Activated CD4-positive, alpha-beta memory T cell treated with anti-CD3 and anti-CD28 coated beads, Interleukin-2, amount 10 ng/mL, durations not matched to agents 7 days and 5 days (primary cell): ENCODE measurements at regions of chr1 and their contacts with region 1.

Region 1: GRCh38 chr1:66331657-66332547 is 202.1 kb upstream of the SGIP1 start:
- DNase-seq: peak; percentile 63
- H3K4me3 Mint-ChIP-seq: peak overlapping the region; percentile 98
- H3K27ac Mint-ChIP-seq: peak overlapping the region; percentile 93
- H3K4me1 Mint-ChIP-seq: peaks cover 49% of the 10 kb centered on the region
- H3K27me3 Mint-ChIP-seq: no peaks in the 10 kb centered on the region

Region 2: DNA sequence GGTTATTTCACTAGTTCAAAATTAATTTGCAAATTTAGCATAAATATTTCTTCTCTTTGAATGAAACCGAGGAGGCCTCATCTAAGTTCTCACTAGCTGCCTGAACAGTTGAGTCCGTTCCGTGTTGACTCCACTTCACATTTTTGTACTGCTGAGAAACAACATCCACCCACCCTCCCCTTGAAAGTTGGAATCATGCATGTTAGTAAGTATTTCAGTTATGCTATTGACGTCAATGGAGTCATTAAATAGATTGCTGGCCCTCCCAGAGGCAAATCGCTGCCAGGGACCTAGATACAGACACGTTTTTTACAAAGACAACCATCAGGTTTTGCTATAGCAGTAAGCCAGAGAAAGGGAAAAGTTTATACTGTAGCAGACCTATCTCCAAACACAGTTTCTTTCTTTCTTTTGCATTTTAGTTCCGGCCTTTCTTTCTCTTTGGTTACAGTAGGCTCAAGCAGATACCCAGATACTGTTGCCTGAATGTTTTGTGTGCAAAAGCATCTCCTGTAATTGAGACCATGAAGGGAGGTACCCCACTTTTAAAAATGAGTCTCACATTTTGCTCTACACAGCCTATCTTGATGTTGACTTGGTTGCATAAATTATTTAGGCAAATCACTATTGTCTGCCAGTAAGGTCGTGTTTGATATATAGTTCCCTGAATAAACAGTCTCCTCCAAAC is 60.5 kb before region 1 on chr1:
- CTCF ChIA-PET with region 1: interaction called, 10 read pairs
- POLR2A ChIA-PET with region 1: interaction called, 60 read pairs
- DNase-seq: peak; percentile 34
- H3K4me3 Mint-ChIP-seq: no peak overlapping the region
- H3K27ac Mint-ChIP-seq: peak overlapping the region; percentile 57
- H3K4me1 Mint-ChIP-seq: peaks cover 61% of the 10 kb centered on the region
- H3K27me3 Mint-ChIP-seq: peaks cover 2% of the 10 kb centered on the region

Region 3: DNA sequence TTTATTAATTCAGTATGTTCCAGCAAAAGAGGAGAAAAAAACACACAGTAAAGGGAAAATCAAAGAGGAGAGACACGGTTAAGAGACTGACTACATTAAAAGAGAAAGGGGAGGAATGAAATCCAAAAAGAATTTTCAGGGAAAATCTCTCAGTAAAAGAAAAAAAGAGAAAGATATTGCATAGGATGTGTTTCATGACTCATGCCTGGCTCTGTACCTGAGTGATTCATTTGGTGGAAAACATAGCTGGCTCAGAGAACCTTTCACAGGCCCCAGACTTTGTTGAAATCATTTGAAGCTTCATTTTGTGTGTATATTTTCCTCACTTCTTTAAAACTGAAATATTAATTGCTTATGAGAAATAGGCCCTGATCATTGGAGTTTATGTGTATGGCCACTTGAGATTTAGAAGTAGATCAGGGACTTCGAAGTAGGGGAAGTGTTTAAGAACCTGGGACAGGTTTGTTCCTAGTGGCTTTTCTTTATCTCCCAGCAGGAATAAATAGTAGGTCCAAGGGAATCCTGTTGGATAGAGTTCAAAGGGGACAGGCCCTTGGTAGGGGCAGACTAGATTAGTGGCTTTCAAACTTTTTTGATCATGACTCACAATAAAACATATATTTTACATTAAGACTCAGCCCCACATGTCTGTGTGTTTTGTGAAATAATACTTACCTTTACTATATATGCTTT is 37.1 kb before region 1 on chr1:
- CTCF ChIA-PET with region 1: no interaction called
- POLR2A ChIA-PET with region 1: interaction called, 67 read pairs
- DNase-seq: no peak
- H3K4me3 Mint-ChIP-seq: no peak overlapping the region
- H3K27ac Mint-ChIP-seq: no peak overlapping the region
- H3K4me1 Mint-ChIP-seq: peaks cover 45% of the 10 kb centered on the region
- H3K27me3 Mint-ChIP-seq: peaks cover 2% of the 10 kb centered on the region

Region 4: DNA sequence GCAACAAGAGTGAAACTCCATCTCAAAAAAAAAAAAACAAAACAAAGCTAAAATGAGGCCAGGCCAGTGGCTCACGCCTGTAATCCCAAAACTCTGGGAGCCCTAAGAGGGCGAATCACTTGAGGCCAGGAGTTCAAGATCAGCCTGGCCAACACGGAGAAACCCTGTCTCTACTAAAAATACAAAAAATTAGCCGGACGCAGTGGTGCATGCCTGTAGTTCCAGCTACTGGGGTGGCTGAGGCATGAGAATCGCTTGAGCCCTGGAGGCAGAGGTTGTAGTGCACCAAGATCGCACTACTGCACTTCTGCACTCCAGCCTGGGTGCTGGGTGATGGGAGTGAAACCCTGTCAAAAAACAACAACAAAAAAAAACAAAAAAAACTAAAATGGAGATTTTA is 10.8 kb after region 1 on chr1:
- CTCF ChIA-PET with region 1: interaction called, 11 read pairs
- POLR2A ChIA-PET with region 1: interaction called, 255 read pairs
- DNase-seq: no peak
- H3K4me3 Mint-ChIP-seq: peak overlapping the region; percentile 31
- H3K27ac Mint-ChIP-seq: peak overlapping the region; percentile 68
- H3K4me1 Mint-ChIP-seq: peaks cover 83% of the 10 kb centered on the region
- H3K27me3 Mint-ChIP-seq: no peaks in the 10 kb centered on the region

Region 5: GRCh38 chr1:66365635-66366034 is 33.7 kb after region 1 on chr1:
- CTCF ChIA-PET with region 1: interaction called, 8 read pairs
- POLR2A ChIA-PET with region 1: interaction called, 22 read pairs
- DNase-seq: no peak
- H3K4me3 Mint-ChIP-seq: no peak overlapping the region
- H3K27ac Mint-ChIP-seq: no peak overlapping the region
- H3K4me1 Mint-ChIP-seq: peaks cover 78% of the 10 kb centered on the region
- H3K27me3 Mint-ChIP-seq: no peaks in the 10 kb centered on the region

Region 6: DNA sequence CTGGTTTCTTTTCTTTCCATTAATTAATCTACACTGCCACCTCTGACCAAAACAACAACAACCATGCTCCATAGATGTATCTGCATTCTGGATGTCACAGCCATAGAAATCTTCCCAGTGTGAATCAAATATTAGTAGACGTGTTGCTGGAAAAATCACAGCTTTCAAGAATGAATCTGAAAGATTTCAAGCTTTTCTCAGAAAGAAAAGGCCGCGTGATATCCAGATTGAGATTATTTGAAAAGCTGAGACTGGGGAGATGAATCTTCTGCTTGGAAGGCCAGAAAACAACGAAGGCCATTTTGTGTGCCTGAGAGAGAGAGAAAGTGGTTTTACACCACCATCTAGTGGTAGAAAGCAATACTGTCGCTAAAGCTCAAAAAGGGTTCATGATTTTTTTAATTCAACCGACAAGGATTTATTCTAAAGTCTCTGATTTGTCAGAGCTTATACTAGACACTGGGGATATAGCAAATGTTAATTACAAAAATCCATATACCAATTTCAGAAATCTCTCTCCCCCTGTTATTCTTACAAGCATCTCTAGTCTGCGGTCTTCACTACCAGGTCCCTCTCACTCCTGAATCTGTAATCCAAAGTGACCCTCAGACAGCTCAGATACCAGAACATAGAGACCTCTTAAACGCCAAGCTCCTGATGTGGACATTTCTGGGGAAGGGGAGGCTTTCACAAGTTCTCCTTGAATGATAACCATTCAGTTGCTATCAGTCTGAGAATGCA is 114.5 kb after region 1 on chr1:
- CTCF ChIA-PET with region 1: interaction called, 58 read pairs
- POLR2A ChIA-PET with region 1: interaction called, 8 read pairs
- DNase-seq: peak; percentile 31
- H3K4me3 Mint-ChIP-seq: peak overlapping the region; percentile 75
- H3K27ac Mint-ChIP-seq: peak overlapping the region; percentile 93
- H3K4me1 Mint-ChIP-seq: peaks cover 29% of the 10 kb centered on the region
- H3K27me3 Mint-ChIP-seq: peaks cover 18% of the 10 kb centered on the region